Heart left ventricle (tissue), 16 donors: ENCODE measurements at regions of chr16 and their contacts with region 1.

Region 1: DNA sequence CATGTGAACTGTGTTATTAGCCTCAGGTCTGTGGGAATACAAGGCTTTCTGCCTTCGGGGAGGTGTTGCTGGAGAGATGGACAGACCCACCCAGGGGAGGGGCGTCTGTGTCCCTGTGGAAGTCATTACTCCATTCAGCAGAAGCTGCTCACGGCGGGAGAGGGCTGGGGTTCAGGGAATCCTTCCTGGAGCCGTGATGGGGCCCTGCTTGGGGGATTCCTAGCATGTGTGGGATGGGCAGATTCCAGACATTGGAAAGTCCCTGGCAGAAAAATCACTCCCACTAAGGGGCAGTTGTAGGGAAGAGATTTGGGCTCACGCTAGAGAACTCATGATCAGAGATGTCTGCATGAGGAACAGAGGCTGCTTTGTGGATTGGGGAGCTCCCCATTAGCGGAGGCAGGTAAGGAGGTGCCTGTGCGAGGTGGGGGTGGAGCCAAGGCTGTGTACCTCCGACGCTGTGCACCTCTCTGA is 56.3 kb upstream of the IL34 start:
- DNase-seq: peak; percentile 46 to 66 (median 59)
- ATAC-seq: peak in 3 of 4 donors; percentile 27 to 60 (median 42)
- H3K4me3 ChIP-seq: peak overlapping the region in 4 of 12 donors; percentile 4 to 34 (median 19)
- H3K27ac ChIP-seq: peak overlapping the region in 10 of 12 donors; percentile 4 to 73 (median 48)
- H3K4me1 ChIP-seq: peaks cover 3 to 57% (median 32%) of the 10 kb centered on the region in 12 donors
- H3K27me3 ChIP-seq: no peaks in the 10 kb centered on the region
- CTCF ChIP-seq: no peak
- POLR2A ChIP-seq: no peak

Region 2: GRCh38 chr16:70512456-70512855 is 77.6 kb before region 1 on chr16:
- intact Hi-C with region 1: no loop called
- DNase-seq: no peak
- ATAC-seq: no peak
- H3K4me3 ChIP-seq: no peak overlapping the region
- H3K27ac ChIP-seq: no peak overlapping the region
- H3K4me1 ChIP-seq: peaks cover 0 to 6% (median 0%) of the 10 kb centered on the region in 12 donors
- H3K27me3 ChIP-seq: no peaks in the 10 kb centered on the region
- CTCF ChIP-seq: no peak
- POLR2A ChIP-seq: no peak

Region 3: DNA sequence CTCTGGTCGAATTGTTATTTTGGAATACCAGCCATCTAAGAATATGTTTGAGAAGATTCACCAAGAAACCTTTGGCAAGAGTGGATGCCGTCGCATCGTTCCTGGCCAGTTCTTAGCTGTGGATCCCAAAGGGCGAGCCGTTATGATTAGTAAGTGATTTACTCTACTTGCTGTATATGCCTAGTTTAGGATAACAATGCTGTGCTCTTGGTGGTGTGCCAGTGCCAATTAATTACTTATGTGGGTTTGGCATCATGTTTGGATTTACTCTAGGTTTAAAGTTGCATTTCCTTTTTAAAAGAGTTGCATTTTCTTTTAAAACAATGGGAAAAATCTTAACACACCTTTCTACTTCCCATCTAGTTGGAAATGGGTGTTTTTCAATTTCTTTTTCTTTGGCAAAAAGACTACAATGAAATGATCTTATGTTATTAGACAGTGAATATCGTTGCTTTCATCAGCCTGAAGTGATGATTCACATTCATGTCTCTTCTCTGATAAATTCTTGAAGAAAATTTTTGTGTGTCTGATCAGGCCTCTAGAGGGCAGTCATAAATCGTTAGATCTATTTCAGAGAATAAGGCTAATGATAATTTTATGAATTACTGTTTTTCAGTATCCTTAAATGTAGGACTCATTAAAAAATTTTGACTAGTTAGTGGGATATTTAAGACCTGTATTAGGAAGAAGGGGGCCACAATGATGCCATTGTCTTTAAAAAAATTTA is 60.8 kb before region 1 on chr16:
- intact Hi-C with region 1: no loop called
- DNase-seq: no peak
- ATAC-seq: no peak
- H3K4me3 ChIP-seq: no peak overlapping the region
- H3K27ac ChIP-seq: no peak overlapping the region
- H3K4me1 ChIP-seq: peaks cover 3 to 52% (median 35%) of the 10 kb centered on the region in 12 donors
- H3K27me3 ChIP-seq: no peaks in the 10 kb centered on the region
- CTCF ChIP-seq: peak; percentile 35 to 71 (median 53)
- POLR2A ChIP-seq: no peak

Region 4: GRCh38 chr16:70548936-70549335 is 41.1 kb before region 1 on chr16:
- intact Hi-C with region 1: loop called in 1 of 10 experiments (anchors 2 kb)
- DNase-seq: no peak
- ATAC-seq: no peak
- H3K4me3 ChIP-seq: no peak overlapping the region
- H3K27ac ChIP-seq: no peak overlapping the region
- H3K4me1 ChIP-seq: peaks cover 0 to 15% (median 0%) of the 10 kb centered on the region in 12 donors
- H3K27me3 ChIP-seq: no peaks in the 10 kb centered on the region
- CTCF ChIP-seq: no peak
- POLR2A ChIP-seq: no peak

Region 5: DNA sequence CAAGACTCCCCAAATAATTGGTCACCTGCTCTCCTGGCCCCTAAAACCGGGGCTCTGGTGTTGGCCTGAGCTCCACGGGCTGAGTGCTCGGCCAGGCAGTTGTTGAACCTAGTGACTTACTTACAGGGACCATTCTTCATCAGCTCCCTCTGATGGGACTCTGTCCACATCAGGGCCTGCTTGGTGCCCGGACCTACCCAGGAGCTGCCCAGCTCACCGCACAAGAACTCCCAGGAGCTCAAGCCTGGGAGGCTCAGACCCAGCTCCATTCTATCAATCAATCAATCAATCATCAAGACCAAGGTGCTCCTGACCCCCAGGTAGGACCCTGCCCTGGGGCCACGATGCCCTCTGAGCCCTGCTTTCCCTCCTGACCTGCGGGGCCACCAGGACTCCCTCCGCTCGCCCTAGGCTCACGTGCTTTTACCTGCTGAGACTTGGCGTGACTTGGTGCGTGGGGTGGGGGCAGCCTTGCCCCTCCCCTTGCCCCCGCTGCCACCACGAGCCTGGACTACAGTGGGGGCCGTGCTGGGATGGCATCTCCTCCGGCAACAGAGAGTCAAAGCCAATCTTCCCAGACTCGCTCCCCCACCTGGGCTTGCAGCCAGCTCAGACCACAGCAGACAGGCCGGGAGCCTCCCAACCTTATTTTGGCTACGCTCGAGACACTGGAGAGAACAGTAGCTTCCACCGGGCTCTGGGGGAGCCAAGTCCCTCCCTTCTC is 72.0 kb after region 1 on chr16:
- intact Hi-C with region 1: no loop called
- DNase-seq: peak in 1 of 5 donors; percentile 36
- ATAC-seq: peak in 3 of 4 donors; percentile 12 to 30 (median 17)
- H3K4me3 ChIP-seq: no peak overlapping the region
- H3K27ac ChIP-seq: peak overlapping the region in 4 of 12 donors; percentile 2 to 68 (median 22)
- H3K4me1 ChIP-seq: peaks cover 0 to 24% (median 9%) of the 10 kb centered on the region in 12 donors
- H3K27me3 ChIP-seq: no peaks in the 10 kb centered on the region
- CTCF ChIP-seq: no peak
- POLR2A ChIP-seq: no peak

Region 6: DNA sequence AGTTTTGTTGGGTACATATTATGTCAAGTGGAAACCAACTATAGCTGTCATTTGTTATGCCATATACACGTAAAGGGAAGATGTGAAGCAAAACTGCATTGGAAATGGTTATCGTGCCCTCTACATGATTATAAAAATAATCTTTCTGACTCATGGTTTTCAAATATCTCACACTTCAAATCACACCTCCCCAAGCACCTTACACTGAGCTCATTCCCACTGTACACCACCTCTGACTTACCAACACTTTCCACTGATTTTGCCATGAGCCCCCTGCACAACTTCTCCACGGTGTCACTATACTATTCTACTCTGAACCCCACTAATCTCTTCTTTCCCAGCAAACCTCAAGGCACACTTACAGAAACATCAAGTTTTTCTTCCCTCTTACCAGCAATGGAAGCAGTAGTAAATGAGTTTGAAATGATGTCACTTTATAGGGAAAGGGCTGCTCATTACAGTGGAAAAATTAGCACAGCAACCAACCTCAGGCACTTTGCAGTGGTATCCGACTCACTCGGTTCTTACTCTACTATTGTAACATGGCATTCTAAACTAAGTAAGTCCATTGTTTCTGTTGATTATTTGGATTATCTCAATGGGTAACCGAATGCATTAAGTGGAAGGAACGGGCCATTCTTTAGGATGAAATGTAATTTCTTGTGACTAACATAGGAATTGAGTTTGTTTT is 1275.3 kb after region 1 on chr16:
- intact Hi-C with region 1: no loop called
- DNase-seq: no peak
- ATAC-seq: peak in 2 of 4 donors; percentile 9 to 47
- H3K4me3 ChIP-seq: no peak overlapping the region
- H3K27ac ChIP-seq: no peak overlapping the region
- H3K4me1 ChIP-seq: no peaks in the 10 kb centered on the region
- H3K27me3 ChIP-seq: no peaks in the 10 kb centered on the region
- CTCF ChIP-seq: no peak
- POLR2A ChIP-seq: no peak